Posterior vena cava (tissue), 2 donors: ENCODE measurements at regions of chrX and their contacts with region 1.

Region 1: GRCh38 chrX:154091678-154092077 is 5.8 kb downstream of the MECP2 start:
- DNase-seq: no peak

Region 2: DNA sequence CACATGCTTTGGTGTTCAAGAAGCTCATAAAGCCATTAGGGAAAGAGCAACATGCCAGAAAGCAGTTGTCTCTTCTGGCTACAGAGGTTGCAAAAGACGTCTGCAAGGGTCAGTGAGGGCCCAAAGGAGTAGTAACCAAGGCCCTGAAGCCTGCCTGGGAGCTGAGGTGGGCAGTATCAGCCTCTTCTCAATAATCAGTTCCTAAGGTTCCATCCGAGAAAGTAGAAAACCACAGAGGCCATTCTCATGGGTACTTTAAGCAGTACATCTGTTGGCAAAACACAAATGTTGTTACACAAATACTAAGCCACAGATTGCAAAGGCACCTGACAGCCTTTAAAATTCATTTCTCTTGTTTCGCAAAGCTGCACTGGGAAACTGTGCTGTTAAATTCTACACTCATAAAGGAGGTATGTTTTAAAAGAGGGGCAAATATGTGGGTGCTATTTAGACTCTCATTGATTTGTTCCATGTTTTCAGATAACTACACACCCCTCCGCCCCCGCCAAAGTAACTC is 31.9 kb before region 1 on chrX:
- intact Hi-C with region 1: loop called in 1 of 2 experiments (anchors 1 kb)
- DNase-seq: no peak